ENCODE measurements at regions of chr5 and their contacts with region 1.

Region 1: DNA sequence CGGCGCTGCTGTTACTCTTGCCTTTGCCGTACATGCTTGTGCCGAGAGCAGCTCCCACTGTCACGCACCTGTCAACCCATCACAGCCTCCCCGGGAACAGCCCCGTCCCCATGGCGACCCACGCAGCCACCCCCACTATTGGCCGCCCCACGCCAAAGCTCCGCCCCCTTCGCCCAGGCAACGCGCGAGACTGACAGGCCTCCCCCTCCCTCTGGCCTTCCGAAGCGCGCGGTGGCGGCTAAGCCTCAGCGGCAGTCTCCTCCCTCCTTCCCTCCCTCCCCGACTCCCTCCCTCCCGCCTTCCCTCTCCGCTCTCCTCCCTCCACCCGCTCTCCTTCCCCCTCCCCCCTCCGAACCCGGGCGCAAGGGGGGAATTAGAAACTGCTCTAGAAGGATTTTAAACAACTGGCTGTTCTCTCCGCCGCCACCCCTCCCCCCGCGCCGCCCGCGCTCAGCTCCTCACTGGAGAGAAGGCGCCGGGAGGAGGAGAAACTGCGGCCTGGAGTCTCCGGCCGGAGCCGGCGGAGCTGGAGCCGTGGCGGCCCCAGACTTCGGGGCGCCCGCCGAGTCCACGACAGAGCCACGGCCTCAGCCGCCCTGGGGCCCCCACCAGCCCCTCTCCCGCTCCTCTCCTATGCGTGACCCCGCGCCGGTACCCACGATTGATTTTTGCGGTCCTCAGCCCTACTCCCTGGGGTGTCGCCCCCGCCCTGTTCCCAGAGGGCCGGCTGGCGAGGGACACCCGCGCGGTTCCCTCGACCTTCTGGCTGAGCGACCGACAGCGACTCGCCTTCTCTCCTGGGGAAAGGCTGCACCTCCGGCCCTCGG is at the start of gene SSBP2:
- DNase-seq: peak; percentile 98
- H3K4me3 ChIP-seq: peak within 1 kb of the TSS; percentile 86
- H3K27ac ChIP-seq: peak within 1 kb of the TSS; percentile 93
- H3K27me3 ChIP-seq: no peaks in the 10 kb centered on the region
- CTCF ChIP-seq: no peak
- polyA plus RNA-seq, gene SSBP2: 70.4 and 74.3 TPM in 2 replicates

Region 2: DNA sequence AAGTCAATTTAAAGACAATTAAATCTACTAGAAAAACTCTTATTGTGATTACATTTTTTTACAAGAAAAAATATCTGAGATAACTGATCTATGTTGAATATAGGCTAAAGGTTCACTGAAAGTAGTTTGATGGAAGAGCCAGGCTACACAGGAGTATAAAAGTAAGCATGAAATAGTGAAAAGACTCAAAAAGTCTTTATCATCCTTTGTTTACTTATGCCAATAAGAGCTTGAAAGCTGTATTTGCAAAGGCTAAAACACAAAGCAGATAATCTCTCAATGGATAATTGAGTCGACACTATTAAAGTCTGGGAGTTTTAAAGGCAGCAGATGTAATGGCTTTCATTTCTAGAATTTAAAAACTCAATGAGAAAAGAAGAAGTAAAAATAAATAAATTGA is 42.3 kb before region 1 on chr5:
- CTCF ChIA-PET with region 1: no interaction called
- POLR2A ChIA-PET with region 1: no interaction called
- DNase-seq: no peak
- H3K4me3 ChIP-seq: no peak overlapping the region
- H3K27ac ChIP-seq: no peak overlapping the region
- H3K27me3 ChIP-seq: no peaks in the 10 kb centered on the region
- CTCF ChIP-seq: no peak

Region 3: GRCh38 chr5:81779125-81779915 is 28.1 kb after region 1 on chr5:
- CTCF ChIA-PET with region 1: no interaction called
- POLR2A ChIA-PET with region 1: interaction called, 10 read pairs
- DNase-seq: no peak
- H3K4me3 ChIP-seq: peak overlapping the region; percentile 38
- H3K27ac ChIP-seq: peak overlapping the region; percentile 49
- H3K27me3 ChIP-seq: no peaks in the 10 kb centered on the region
- CTCF ChIP-seq: no peak

Region 4: DNA sequence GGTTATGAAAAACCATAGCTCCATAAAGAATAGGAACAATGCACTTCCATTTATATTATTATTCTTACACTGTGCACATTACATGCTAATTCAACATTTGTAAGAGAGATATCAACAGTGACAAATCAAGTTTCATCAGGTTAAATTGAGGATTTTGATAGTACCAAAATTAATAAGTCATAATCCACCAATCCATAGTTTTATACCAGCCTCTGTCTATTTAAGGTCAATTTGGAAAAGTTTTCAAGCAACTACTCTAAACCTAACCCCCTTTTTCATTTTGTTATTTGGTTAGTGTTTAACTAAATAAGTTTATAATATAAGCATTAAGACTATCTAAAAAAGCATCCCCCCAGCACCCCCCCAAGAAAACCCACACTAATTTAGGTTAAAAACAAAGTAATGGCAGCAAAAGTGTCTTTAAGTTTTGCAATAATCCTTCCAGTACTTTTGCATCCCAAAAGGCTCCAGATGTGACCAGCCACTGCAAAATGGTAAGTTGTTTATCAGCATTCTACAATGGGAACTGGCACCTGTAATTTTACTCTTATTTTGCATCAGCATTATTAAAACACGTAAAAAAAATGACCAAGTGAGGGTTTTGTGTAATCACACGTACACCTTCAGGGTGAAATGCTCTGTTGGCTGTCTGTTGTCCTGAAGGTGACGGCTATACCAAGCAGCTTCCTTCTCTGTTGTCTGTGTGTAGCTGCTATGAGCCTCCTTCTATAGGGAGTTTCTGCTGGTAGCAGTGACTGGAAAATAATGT is 36.4 kb after region 1 on chr5:
- CTCF ChIA-PET with region 1: interaction called, 7 read pairs
- POLR2A ChIA-PET with region 1: interaction called, 11 read pairs
- DNase-seq: peak; percentile 34
- H3K4me3 ChIP-seq: no peak overlapping the region
- H3K27ac ChIP-seq: no peak overlapping the region
- H3K27me3 ChIP-seq: no peaks in the 10 kb centered on the region
- CTCF ChIP-seq: no peak